MCF 10A (cell line): ENCODE measurements at regions of chr5 and their contacts with region 1.

Region 1: GRCh38 chr5:68287976-68288706 is 72.6 kb downstream of the PIK3R1 start:
- DNase-seq: peak; percentile 41
- H3K4me3 Mint-ChIP-seq: peak overlapping the region; percentile 69
- H3K27ac Mint-ChIP-seq: peak overlapping the region; percentile 73
- H3K4me1 Mint-ChIP-seq: peaks cover 43% of the 10 kb centered on the region
- H3K27me3 Mint-ChIP-seq: no peaks in the 10 kb centered on the region
- CTCF ChIP-seq: no peak

Region 2: DNA sequence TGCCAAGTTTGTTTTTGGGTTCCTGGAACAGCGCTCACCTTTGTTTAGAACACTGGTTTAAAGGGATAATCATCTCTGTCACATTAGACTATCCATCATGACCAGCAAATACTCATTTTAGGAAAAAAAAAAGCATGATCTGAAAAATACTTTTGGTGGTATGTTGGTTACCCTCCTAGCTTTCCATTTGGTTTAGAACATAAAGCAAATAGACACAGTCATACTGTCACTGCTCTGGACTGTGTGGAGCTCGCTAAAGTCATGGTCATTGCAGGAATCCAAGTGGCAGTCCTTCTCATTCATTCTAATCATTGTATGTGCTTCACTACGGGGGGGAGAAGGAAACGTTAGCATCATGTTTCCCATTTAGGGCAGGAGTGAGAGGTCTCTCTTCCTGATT is 11.0 kb after region 1 on chr5:
- CTCF ChIA-PET with region 1: interaction called, 33 read pairs
- POLR2A ChIA-PET with region 1: interaction called, 16 read pairs
- intact Hi-C with region 1: no loop called
- DNase-seq: no peak
- H3K4me3 Mint-ChIP-seq: no peak overlapping the region
- H3K27ac Mint-ChIP-seq: peak overlapping the region; percentile 5
- H3K4me1 Mint-ChIP-seq: peaks cover 27% of the 10 kb centered on the region
- H3K27me3 Mint-ChIP-seq: no peaks in the 10 kb centered on the region
- CTCF ChIP-seq: no peak

Region 3: DNA sequence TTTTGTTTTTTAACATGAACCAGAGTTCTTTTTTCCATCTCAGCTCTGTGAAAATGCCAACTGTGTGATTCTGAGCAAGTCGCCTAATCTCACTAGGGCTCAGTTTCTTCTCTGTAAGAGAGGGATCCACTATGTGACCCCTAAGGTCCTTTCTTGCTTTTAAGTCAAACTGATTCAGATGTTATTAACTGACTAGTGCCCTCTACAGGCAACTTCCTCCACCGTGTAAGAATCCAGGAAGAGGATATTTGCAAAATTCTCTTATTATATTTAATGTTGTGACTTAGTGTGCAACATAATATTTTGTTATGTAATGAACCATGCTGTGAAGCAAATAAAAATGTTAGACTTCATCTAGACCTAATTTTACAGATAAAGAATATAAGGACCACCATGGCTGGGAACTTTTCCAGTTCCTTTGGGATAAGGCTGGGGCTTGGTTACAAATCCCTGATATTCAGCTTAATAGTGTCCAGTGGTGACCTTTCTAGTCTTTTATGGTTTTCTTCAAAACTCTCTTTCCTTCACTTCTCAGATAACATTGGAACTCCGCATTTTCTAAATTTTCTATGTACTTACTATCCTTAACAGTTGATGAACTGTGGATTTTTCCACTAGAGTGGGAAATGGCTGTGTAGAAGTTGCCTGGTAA is 172.1 kb after region 1 on chr5:
- CTCF ChIA-PET with region 1: interaction called, 11 read pairs
- POLR2A ChIA-PET with region 1: interaction called, 5 read pairs
- intact Hi-C with region 1: loop called (anchors 1 kb)
- DNase-seq: peak; percentile 67
- H3K4me3 Mint-ChIP-seq: no peak overlapping the region
- H3K27ac Mint-ChIP-seq: no peak overlapping the region
- H3K4me1 Mint-ChIP-seq: peaks cover 10% of the 10 kb centered on the region
- H3K27me3 Mint-ChIP-seq: no peaks in the 10 kb centered on the region
- CTCF ChIP-seq: peak; percentile 69

Region 4: GRCh38 chr5:68683632-68684036 is 395.5 kb after region 1 on chr5:
- CTCF ChIA-PET with region 1: no interaction called
- POLR2A ChIA-PET with region 1: interaction called, 3 read pairs
- intact Hi-C with region 1: loop called (anchors 1 kb)
- DNase-seq: peak; percentile 84
- H3K4me3 Mint-ChIP-seq: no peak overlapping the region
- H3K27ac Mint-ChIP-seq: no peak overlapping the region
- H3K4me1 Mint-ChIP-seq: peaks cover 10% of the 10 kb centered on the region
- H3K27me3 Mint-ChIP-seq: no peaks in the 10 kb centered on the region
- CTCF ChIP-seq: no peak

Region 5: DNA sequence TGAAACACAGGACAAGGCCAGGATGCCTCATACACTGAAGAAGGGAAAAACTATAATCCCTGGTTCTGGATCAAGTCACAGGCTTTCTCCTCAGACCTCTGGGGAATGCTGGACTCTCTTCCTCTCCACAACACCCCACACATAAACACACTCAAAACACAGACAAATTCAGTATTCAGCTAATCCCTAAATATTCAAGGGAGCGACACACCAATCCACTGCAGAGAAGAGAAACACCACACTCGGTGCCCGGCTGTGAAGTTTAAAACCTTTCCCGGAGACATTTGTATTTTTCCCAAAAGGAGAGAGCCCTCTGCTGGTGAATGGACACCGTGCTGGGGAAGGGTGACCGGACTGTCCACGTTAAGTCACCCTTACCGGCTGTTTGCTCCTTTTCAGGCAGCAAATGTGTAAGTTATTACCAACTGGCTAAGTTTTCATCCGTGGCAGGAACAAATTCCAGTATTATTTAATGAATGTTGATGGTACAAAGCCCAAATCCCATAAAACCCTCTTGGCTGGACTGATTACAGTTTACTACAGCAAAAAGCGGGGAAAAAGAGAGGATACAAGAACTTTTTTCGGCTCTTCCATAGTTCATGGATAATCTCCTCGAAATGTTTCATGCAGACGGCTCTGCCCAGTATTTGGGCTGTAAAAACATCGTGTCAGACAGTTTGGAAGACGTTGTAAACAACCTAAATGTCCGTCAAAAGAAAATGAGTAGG is 674.8 kb after region 1 on chr5:
- CTCF ChIA-PET with region 1: interaction called, 8 read pairs
- POLR2A ChIA-PET with region 1: interaction called, 4 read pairs
- intact Hi-C with region 1: loop called (anchors 1 kb)
- DNase-seq: peak; percentile 73
- H3K4me3 Mint-ChIP-seq: no peak overlapping the region
- H3K27ac Mint-ChIP-seq: no peak overlapping the region
- H3K4me1 Mint-ChIP-seq: peaks cover 6% of the 10 kb centered on the region
- H3K27me3 Mint-ChIP-seq: no peaks in the 10 kb centered on the region
- CTCF ChIP-seq: peak; percentile 73